Lower leg skin (tissue), 4 donors: ENCODE measurements at regions of chr7 and their contacts with region 1.

Region 1: GRCh38 chr7:85023045-85023712 is 163.7 kb downstream of the SEMA3D start:
- DNase-seq: peak in 1 of 2 donors; percentile 33
- H3K4me3 ChIP-seq: no peak overlapping the region
- CTCF ChIP-seq: peak in 1 of 3 donors; percentile 41
- POLR2A ChIP-seq: no peak

Region 2: GRCh38 chr7:83976295-83976694 is 1046.9 kb before region 1 on chr7:
- intact Hi-C with region 1: loop called (anchors 10 kb)
- DNase-seq: no peak
- H3K4me3 ChIP-seq: no peak overlapping the region
- CTCF ChIP-seq: no peak
- POLR2A ChIP-seq: no peak